HEK293T (cell line): ENCODE measurements at regions of chr15 and their contacts with region 1.

Region 1: DNA sequence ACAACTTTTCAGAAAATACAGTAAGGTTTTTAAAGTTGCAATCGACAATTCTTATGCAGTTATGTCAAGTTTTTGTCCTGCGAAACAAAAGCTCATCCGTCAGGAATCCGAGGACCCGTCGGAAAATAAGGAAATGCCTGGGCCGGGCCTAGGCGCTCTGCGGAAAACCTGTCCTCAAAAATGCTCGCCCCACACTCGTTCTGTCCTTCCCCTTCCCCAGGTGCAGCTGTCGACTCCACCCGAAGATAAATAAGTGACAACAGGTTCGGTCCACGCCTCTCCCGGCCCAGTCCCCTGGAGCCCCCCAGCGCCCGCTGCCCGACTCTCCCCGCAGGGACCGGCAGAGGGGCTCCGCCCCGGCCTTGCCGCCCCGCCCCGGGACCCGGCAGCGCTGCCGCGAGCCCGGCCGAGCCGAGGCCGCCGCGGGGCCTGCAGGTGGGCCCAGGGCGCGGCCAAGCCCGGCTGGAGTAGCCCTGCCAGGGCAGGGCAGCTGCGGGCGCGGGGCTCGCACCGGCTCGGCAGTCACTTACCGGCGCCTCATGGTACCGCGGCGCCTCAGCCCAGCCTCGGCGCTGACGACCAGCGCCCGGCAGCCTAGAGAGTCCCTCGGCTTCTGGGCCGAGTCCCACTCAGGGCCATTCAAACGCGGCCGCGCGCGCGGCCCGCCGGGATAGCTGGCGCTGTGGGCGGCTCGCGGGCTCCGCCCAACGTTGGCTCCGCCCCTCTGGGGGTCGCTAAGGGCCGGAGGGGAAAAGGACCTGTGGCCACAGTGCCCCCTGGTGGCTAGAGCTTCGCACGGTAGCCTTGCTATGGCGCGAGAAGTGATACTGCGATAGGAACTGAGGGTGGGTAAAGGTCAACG is at the start of gene KATNBL1:
- DNase-seq: peak; percentile 88

Region 2: GRCh38 chr15:34018021-34018645 is 191.5 kb before region 1 on chr15:
- CTCF ChIA-PET with region 1: no interaction called
- POLR2A ChIA-PET with region 1: no interaction called
- DNase-seq: no peak

Region 3: GRCh38 chr15:34109797-34110663 is 99.6 kb before region 1 on chr15:
- CTCF ChIA-PET with region 1: interaction called, 13 read pairs
- POLR2A ChIA-PET with region 1: interaction called, 10 read pairs
- DNase-seq: peak; percentile 11

Region 4: GRCh38 chr15:34161329-34161955 is 48.2 kb before region 1 on chr15:
- CTCF ChIA-PET with region 1: no interaction called
- POLR2A ChIA-PET with region 1: no interaction called
- DNase-seq: no peak